Calu3 (cell line): ENCODE measurements at regions of chr1 and their contacts with region 1.

Region 1: GRCh38 chr1:94383966-94384408 is 34.2 kb upstream of the ABCD3 start:
- DNase-seq: peak; percentile 61
- H3K4me3 Mint-ChIP-seq: peak overlapping the region; percentile 31
- H3K27ac Mint-ChIP-seq: peak overlapping the region; percentile 90
- H3K4me1 Mint-ChIP-seq: peaks cover 44% of the 10 kb centered on the region
- H3K27me3 Mint-ChIP-seq: no peaks in the 10 kb centered on the region
- CTCF ChIP-seq: no peak

Region 2: DNA sequence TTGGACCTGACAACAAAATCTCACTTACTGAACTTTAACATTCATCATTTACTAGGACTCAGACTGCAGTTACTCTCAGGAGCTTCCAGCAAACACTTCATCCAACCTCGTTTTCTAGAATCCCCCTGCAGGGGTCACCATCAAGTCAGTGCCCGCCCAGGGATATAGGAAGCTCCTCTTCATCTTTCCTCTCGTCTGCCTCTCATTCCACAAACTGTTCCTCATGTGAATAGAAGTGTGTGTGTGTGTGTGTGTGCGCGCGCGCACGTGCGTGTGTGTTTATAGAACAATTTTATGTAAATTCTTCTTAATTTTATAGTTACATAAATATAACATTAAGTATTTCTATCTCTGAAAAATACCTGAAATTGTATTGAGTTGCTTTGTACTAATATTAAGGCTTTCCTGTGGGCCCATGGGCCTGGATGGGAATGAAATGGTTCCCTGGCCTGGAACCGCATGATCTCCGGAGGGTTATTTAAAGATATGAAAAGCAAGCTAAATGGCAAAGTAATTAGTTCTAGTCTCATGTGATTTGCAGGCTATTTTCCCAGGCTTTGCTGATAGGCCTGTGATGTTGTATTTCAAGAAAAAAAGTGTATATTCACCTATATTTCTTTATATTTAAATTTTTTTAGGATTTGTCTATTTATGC is 12.5 kb after region 1 on chr1:
- CTCF ChIA-PET with region 1: no interaction called
- intact Hi-C with region 1: loop called (anchors 1 kb)
- DNase-seq: no peak
- H3K4me3 Mint-ChIP-seq: no peak overlapping the region
- H3K27ac Mint-ChIP-seq: no peak overlapping the region
- H3K4me1 Mint-ChIP-seq: peaks cover 26% of the 10 kb centered on the region
- H3K27me3 Mint-ChIP-seq: no peaks in the 10 kb centered on the region
- CTCF ChIP-seq: no peak

Region 3: DNA sequence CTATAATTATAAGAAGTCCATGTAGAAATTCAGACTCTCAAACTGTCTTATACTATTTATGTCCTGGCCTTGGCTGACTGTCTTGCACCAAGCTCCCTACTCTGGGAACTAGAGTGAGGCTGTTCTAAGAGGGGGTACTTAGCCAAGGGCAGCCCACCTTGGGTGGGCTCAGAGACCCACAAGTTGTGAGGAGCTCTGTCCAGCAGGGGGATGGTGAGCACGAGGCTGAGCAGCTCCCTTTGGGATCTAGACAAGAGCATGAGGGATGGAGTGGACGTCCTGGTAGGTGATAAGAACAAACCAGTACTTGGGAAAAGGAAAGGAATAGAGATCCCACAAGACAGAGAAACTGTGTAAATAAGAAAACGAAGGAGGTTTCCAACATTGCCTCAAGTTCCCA is 309.0 kb after region 1 on chr1:
- CTCF ChIA-PET with region 1: no interaction called
- intact Hi-C with region 1: no loop called
- DNase-seq: no peak
- H3K4me3 Mint-ChIP-seq: no peak overlapping the region
- H3K27ac Mint-ChIP-seq: no peak overlapping the region
- H3K4me1 Mint-ChIP-seq: peaks cover 17% of the 10 kb centered on the region
- H3K27me3 Mint-ChIP-seq: no peaks in the 10 kb centered on the region
- CTCF ChIP-seq: no peak